Thyroid gland (tissue), 4 donors: ENCODE measurements at regions of chr15 and their contacts with region 1.

Region 1: DNA sequence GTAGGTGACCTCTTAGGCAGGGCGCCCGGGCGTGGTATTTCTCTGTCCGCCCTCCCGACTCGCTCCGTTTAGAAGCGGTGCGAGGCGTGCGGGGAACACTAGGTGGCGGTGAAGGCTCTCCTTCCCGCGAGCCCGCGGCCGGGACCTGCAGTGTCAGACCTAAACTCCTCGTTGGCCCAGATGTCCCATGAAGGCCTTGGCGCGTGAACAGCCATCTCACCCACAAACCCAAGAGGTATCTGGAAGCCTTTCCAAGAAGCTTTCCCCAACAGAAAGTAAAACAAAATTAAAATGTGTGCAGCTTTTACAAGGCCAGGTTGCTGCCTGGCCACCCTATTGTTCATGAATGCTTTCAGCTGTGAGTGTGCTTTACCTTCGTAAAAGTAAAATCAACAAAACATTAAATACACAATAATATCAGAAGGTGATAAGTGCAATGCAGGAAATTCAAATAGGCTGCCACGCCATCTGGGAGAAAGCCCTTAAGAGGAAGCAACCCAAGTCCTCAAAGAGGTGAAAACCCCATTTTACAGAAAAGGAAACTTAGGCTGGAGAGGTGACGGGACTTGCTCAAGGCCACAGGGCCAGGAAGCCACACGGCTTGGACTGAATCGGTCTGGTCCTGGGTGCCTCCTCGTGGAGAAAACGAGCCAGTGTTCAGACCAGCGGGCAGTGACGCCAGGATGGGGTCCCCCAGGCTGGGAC is 120.3 kb downstream of the ETFA start:
- DNase-seq: peak; percentile 72 to 81
- H3K4me3 ChIP-seq: no peak overlapping the region
- H3K27ac ChIP-seq: no peak overlapping the region
- H3K4me1 ChIP-seq: peaks cover 0 to 8% of the 10 kb centered on the region in 2 donors
- H3K27me3 ChIP-seq: no peaks in the 10 kb centered on the region
- CTCF ChIP-seq: peak; percentile 56 to 89 (median 76)
- POLR2A ChIP-seq: no peak

Region 2: DNA sequence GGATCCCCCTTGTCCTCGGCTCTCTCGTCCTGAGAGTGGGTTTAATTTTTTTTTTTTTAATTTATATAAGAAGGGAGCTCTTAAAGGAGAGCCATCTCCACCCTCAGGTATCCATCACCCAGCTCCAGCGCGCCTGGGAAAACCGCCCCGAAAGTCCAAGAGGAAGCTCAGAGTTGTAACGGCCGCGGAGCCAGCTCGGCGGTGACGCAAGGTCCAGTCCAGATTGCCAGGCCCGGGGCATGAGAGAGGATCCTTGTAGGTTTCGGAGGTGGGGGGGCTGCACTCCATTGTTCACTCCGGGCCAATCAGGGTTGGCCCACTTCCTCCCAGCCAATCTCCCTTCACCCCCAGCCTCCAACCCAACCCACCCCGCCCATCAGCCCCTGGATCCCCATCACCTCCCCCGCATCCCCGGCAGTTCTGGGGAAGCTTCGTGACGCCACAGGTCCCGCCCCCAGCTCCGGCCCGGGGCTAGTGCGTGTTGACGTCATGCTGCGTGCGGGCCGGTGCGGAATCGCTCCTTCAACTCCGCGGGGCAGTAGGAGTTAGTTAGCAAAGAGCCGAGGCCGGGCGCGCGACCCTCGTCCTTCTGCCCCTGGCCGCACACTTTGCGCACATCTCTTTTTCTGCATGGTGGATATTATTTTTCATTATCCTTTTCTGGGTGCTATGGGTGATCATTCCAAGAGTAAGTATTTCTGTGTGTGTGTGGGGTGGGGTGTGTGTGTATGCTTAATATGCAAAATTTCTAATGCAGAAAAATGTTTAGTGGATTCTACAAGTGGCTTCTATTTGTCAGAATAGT is 145.5 kb after region 1 on chr15 and contains the start of gene ISL2:
- intact Hi-C with region 1: loop called (anchors 5 kb)
- DNase-seq: no peak
- H3K4me3 ChIP-seq: no peak within 1 kb of the TSS
- H3K27ac ChIP-seq: no peak within 1 kb of the TSS
- H3K4me1 ChIP-seq: peaks cover 14 to 46% of the 10 kb centered on the region in 2 donors
- H3K27me3 ChIP-seq: peaks cover 73% of the 10 kb centered on the region
- CTCF ChIP-seq: no peak
- POLR2A ChIP-seq: no peak
- total RNA-seq, gene ISL2: not detected

Region 3: DNA sequence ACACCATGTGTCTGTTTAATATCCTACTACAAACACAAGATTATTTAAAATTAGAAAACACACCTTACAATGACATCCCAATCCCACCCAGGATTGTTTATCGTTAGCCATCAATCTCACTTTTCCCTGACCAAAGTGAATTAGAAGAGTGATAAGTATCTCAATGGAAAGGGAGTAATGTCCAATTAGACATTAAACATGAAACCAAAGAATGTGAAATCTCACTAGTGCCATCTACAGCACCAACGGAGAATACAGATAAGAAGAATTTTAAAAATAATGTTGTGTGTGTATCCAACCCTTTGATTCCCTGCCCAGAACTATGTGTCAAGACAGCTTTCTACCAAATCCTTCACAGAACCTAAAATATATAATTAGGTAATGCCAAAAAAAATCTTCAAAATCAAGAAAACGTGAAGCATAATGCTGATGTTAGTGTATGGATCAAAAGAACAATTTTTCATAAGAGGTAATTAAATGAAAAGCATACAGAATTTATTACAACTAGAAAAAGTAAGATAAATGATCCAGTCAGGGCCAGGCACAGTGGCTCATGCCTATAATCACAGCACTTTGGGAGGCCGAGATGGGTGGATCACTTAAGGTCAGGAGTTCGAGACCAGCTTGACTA is 650.0 kb after region 1 on chr15:
- intact Hi-C with region 1: loop called (anchors 10 kb)
- DNase-seq: no peak
- H3K4me3 ChIP-seq: no peak overlapping the region
- H3K27ac ChIP-seq: no peak overlapping the region
- H3K4me1 ChIP-seq: no peaks in the 10 kb centered on the region
- H3K27me3 ChIP-seq: no peaks in the 10 kb centered on the region
- CTCF ChIP-seq: peak in 4 of 6 experiments; percentile 14 to 56 (median 52)
- POLR2A ChIP-seq: no peak